GM12878 (cell line): ENCODE measurements at regions of chr14 and their contacts with region 1.

Region 1: DNA sequence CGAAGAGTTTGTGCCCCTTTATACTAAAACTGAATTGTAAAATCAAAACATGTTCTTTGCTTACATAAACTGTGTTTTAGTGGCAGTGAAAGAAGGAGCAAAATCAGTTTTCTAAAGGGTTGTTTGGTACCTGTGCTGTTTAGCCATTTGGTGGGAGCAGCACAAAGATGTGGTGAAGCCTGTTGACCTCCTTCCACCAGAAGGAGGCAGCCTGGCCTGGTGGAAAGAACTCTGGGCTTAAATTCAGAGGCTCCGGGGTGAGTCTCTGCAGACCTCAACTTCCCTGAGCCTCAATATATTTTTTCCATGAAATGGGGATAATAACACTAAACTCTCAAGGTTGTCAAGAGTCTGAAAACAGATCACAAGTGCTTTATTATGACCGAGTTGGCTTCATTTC is 502.5 kb downstream of the VRK1 start:
- DNase-seq: no peak
- ATAC-seq: peak; percentile 55
- H3K4me3 ChIP-seq: no peak overlapping the region
- H3K27ac ChIP-seq: no peak overlapping the region
- H3K4me1 ChIP-seq: no peaks in the 10 kb centered on the region
- H3K27me3 ChIP-seq: no peaks in the 10 kb centered on the region
- CTCF ChIP-seq: peak; percentile 17 to 49 (median 39); a peak in 5 of 6 replicates
- EP300 ChIP-seq: no peak
- POLR2A ChIP-seq: no peak
- RAD21 ChIP-seq: peak; percentile 78

Region 2: GRCh38 chr14:97185186-97185585 is 114.5 kb before region 1 on chr14:
- CTCF ChIA-PET with region 1: interaction called, 19 read pairs
- POLR2A ChIA-PET with region 1: interaction called, 4 read pairs
- RAD21 ChIA-PET with region 1: interaction called, 12 read pairs
- SMC1A ChIA-PET with region 1: interaction called, 15 read pairs
- in situ Hi-C with region 1: no loop called
- intact Hi-C with region 1: loop called (anchors 10 kb)
- DNase-seq: no peak
- ATAC-seq: peak; percentile 45; the same call in 2 of the 3 replicates
- H3K4me3 ChIP-seq: no peak overlapping the region
- H3K27ac ChIP-seq: no peak overlapping the region
- H3K4me1 ChIP-seq: no peaks in the 10 kb centered on the region
- H3K27me3 ChIP-seq: no peaks in the 10 kb centered on the region
- CTCF ChIP-seq: peak; percentile 35 to 48 (median 37); a peak in 4 of 6 replicates
- EP300 ChIP-seq: no peak
- POLR2A ChIP-seq: no peak
- RAD21 ChIP-seq: peak; percentile 73

Region 3: DNA sequence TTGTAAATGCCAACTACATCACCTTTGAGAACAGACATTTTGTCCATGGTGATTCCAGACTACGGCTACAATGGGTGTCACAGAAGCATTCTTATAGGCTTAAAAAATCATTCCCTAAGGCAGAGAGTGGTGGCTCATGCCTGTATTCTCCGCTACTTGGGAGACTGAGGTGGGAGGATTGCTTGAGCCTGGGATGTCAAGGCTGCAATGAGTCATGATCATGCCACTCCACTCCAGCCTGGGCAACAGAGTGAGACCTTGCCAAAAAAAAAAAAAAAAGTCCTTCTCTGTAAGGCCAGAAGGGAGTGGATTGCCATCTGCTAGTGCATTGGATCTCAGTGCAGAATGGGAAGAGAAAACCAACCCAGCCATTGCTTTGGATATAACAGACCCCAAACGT is 20.0 kb after region 1 on chr14:
- CTCF ChIA-PET with region 1: interaction called, 5 read pairs
- POLR2A ChIA-PET with region 1: no interaction called
- RAD21 ChIA-PET with region 1: interaction called, 45 read pairs
- SMC1A ChIA-PET with region 1: interaction called, 133 read pairs
- in situ Hi-C with region 1: no loop called
- intact Hi-C with region 1: no loop called
- DNase-seq: no peak
- ATAC-seq: no peak; the same call in 2 of the 3 replicates
- H3K4me3 ChIP-seq: no peak overlapping the region
- H3K27ac ChIP-seq: no peak overlapping the region
- H3K4me1 ChIP-seq: peaks cover 8% of the 10 kb centered on the region
- H3K27me3 ChIP-seq: no peaks in the 10 kb centered on the region
- CTCF ChIP-seq: no peak
- EP300 ChIP-seq: no peak
- POLR2A ChIP-seq: no peak
- RAD21 ChIP-seq: no peak

Region 4: GRCh38 chr14:97390096-97390724 is 90.5 kb after region 1 on chr14:
- CTCF ChIA-PET with region 1: interaction called, 4 read pairs
- POLR2A ChIA-PET with region 1: no interaction called
- RAD21 ChIA-PET with region 1: interaction called, 214 read pairs
- SMC1A ChIA-PET with region 1: interaction called, 43 read pairs
- in situ Hi-C with region 1: no loop called
- intact Hi-C with region 1: no loop called
- DNase-seq: no peak
- ATAC-seq: no peak
- H3K4me3 ChIP-seq: no peak overlapping the region
- H3K27ac ChIP-seq: no peak overlapping the region
- H3K4me1 ChIP-seq: peaks cover 13% of the 10 kb centered on the region; the same call in 1 of the 2 replicates
- H3K27me3 ChIP-seq: no peaks in the 10 kb centered on the region
- CTCF ChIP-seq: no peak
- EP300 ChIP-seq: no peak
- POLR2A ChIP-seq: no peak
- RAD21 ChIP-seq: no peak

Region 5: GRCh38 chr14:97442363-97442762 is 142.7 kb after region 1 on chr14:
- CTCF ChIA-PET with region 1: interaction called, 4 read pairs
- POLR2A ChIA-PET with region 1: no interaction called
- RAD21 ChIA-PET with region 1: interaction called, 5 read pairs
- SMC1A ChIA-PET with region 1: interaction called, 18 read pairs
- in situ Hi-C with region 1: no loop called
- intact Hi-C with region 1: no loop called
- DNase-seq: peak; percentile 21
- ATAC-seq: peak; percentile 67
- H3K4me3 ChIP-seq: no peak overlapping the region
- H3K27ac ChIP-seq: peak overlapping the region; percentile 38
- H3K4me1 ChIP-seq: no peaks in the 10 kb centered on the region
- H3K27me3 ChIP-seq: no peaks in the 10 kb centered on the region
- CTCF ChIP-seq: no peak
- EP300 ChIP-seq: peak; percentile 65 to 74; a peak in 3 of 4 replicates
- POLR2A ChIP-seq: no peak
- RAD21 ChIP-seq: peak; percentile 27; the same call in 1 of the 2 replicates

Region 6: GRCh38 chr14:97581016-97581415 is 281.4 kb after region 1 on chr14:
- CTCF ChIA-PET with region 1: interaction called, 16 read pairs
- POLR2A ChIA-PET with region 1: no interaction called
- RAD21 ChIA-PET with region 1: interaction called, 3 read pairs
- SMC1A ChIA-PET with region 1: interaction called, 4 read pairs
- in situ Hi-C with region 1: no loop called
- intact Hi-C with region 1: no loop called
- DNase-seq: no peak
- ATAC-seq: no peak
- H3K4me3 ChIP-seq: no peak overlapping the region
- H3K27ac ChIP-seq: no peak overlapping the region
- H3K4me1 ChIP-seq: no peaks in the 10 kb centered on the region
- H3K27me3 ChIP-seq: no peaks in the 10 kb centered on the region
- CTCF ChIP-seq: no peak
- EP300 ChIP-seq: no peak
- POLR2A ChIP-seq: no peak
- RAD21 ChIP-seq: no peak

Region 7: GRCh38 chr14:97625477-97625876 is 325.8 kb after region 1 on chr14:
- CTCF ChIA-PET with region 1: interaction called, 3 read pairs
- POLR2A ChIA-PET with region 1: no interaction called
- RAD21 ChIA-PET with region 1: no interaction called
- SMC1A ChIA-PET with region 1: no interaction called
- in situ Hi-C with region 1: no loop called
- intact Hi-C with region 1: loop called (anchors 10 kb)
- DNase-seq: no peak
- ATAC-seq: no peak; the same call in 2 of the 3 replicates
- H3K4me3 ChIP-seq: no peak overlapping the region
- H3K27ac ChIP-seq: no peak overlapping the region
- H3K4me1 ChIP-seq: no peaks in the 10 kb centered on the region; the same call in 1 of the 2 replicates
- H3K27me3 ChIP-seq: no peaks in the 10 kb centered on the region
- CTCF ChIP-seq: no peak
- EP300 ChIP-seq: no peak
- POLR2A ChIP-seq: no peak
- RAD21 ChIP-seq: no peak